B cell (primary cell): ENCODE measurements at regions of chr14 and their contacts with region 1.

Region 1: DNA sequence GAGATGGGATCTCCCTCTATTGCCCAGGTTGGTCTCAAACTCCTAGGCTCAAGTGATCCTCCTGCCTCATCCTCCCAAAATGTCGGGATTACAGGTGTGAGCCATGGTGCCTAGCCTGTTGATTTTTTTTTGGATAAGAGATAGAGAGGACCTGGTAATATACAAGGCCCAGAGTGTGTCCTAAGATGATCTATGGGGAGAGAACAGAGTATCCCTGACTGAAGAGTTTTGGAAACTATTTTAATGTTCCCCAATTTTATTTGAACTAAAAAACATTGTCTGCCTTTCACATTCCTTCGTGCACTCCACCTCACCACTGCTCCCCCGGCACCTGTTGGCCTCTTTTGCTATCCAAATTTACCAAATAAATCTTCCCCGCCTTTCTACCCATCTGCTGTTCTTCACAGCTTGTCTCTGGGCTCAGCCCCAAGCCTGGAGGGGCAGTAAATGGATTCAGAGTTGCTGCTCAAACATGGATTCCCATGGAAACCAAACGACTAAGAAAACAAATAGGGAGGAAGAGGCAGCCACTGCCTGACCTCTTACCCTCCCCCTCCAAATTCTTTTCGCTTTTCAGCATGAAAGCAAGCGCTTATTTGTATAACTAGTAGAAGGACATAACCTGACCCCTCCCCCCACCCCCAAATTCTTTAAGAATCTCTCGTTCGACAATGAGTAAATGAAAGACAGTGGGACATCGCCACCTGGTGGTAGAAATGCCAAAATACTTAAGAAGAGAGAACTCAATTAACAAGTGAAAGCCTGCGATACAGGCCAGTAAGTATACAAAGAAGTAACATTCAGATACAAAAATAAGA is 22.6 kb downstream of the OR10G3 start:
- DNase-seq: peak; percentile 88
- ATAC-seq: peak; percentile 53
- H3K4me3 ChIP-seq: peak overlapping the region in 3 of 5 experiments; percentile 1 to 45 (median 31)
- H3K4me3 Mint-ChIP-seq: peak overlapping the region; percentile 26
- H3K27ac ChIP-seq: no peak overlapping the region
- H3K27ac Mint-ChIP-seq: no peak overlapping the region
- H3K4me1 ChIP-seq: peaks cover 5% of the 10 kb centered on the region in 2 donors
- H3K4me1 Mint-ChIP-seq: peaks cover 6% of the 10 kb centered on the region
- H3K27me3 ChIP-seq: no peaks in the 10 kb centered on the region
- H3K27me3 Mint-ChIP-seq: peaks cover 3% of the 10 kb centered on the region
- CTCF ChIP-seq: peak; percentile 81

Region 2: GRCh38 chr14:21071225-21072030 is 485.9 kb before region 1 on chr14:
- CTCF ChIA-PET with region 1: no interaction called
- POLR2A ChIA-PET with region 1: no interaction called
- intact Hi-C with region 1: loop called (anchors 5 kb)
- DNase-seq: peak; percentile 79
- ATAC-seq: peak; percentile 73
- H3K4me3 ChIP-seq: peak overlapping the region; percentile 17 to 69 (median 53)
- H3K4me3 Mint-ChIP-seq: peak overlapping the region; percentile 93
- H3K27ac ChIP-seq: no peak overlapping the region
- H3K27ac Mint-ChIP-seq: peak overlapping the region; percentile 73
- H3K4me1 ChIP-seq: peaks cover 34 to 40% of the 10 kb centered on the region in 2 donors
- H3K4me1 Mint-ChIP-seq: peaks cover 44% of the 10 kb centered on the region
- H3K27me3 ChIP-seq: peaks cover 0 to 50% (median 18%) of the 10 kb centered on the region in 4 experiments
- H3K27me3 Mint-ChIP-seq: peaks cover 24% of the 10 kb centered on the region
- CTCF ChIP-seq: no peak

Region 3: GRCh38 chr14:21136024-21136423 is 421.3 kb before region 1 on chr14:
- CTCF ChIA-PET with region 1: interaction called, 3 read pairs
- POLR2A ChIA-PET with region 1: no interaction called
- intact Hi-C with region 1: loop called (anchors 10 kb)
- DNase-seq: peak; percentile 26
- ATAC-seq: no peak
- H3K4me3 ChIP-seq: no peak overlapping the region
- H3K4me3 Mint-ChIP-seq: no peak overlapping the region
- H3K27ac ChIP-seq: no peak overlapping the region
- H3K27ac Mint-ChIP-seq: no peak overlapping the region
- H3K4me1 ChIP-seq: no peaks in the 10 kb centered on the region
- H3K4me1 Mint-ChIP-seq: no peaks in the 10 kb centered on the region
- H3K27me3 ChIP-seq: no peaks in the 10 kb centered on the region
- H3K27me3 Mint-ChIP-seq: peaks cover 16% of the 10 kb centered on the region
- CTCF ChIP-seq: peak; percentile 86

Region 4: DNA sequence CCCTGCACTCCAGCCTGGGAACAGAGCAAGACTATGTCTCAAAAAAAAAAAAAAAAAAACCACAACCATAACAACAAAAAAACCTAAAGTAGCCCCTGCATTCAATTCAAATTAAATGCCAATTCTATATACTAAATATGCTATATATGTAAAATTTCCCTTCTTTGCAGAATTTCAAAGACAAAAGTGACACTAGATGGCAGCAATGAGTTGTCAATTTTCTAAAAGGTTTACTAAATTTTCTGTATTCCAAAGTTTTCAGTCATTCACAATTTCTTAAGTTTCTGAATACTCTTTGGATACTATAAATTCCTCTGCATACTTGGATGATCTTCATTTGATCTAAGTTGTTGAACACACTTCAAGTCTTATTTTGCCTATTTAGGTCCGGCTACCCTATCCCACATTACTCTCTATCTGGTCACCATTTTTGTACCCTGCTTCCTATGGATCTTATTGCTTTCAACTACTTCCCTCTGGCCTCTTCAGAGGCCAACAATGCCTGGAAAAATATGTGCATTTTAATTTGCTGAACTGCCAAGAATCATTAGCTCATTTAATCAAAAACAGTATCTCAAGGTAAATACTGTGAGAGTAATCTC is 316.0 kb before region 1 on chr14:
- CTCF ChIA-PET with region 1: interaction called, 3 read pairs
- POLR2A ChIA-PET with region 1: no interaction called
- intact Hi-C with region 1: loop called (anchors 2 kb)
- DNase-seq: peak; percentile 58
- ATAC-seq: no peak
- H3K4me3 ChIP-seq: no peak overlapping the region
- H3K4me3 Mint-ChIP-seq: no peak overlapping the region
- H3K27ac ChIP-seq: peak overlapping the region in 1 of 2 donors; percentile 10
- H3K27ac Mint-ChIP-seq: peak overlapping the region; percentile 0
- H3K4me1 ChIP-seq: peaks cover 0 to 5% of the 10 kb centered on the region in 2 donors
- H3K4me1 Mint-ChIP-seq: peaks cover 36% of the 10 kb centered on the region
- H3K27me3 ChIP-seq: no peaks in the 10 kb centered on the region
- H3K27me3 Mint-ChIP-seq: no peaks in the 10 kb centered on the region
- CTCF ChIP-seq: peak; percentile 74

Region 5: DNA sequence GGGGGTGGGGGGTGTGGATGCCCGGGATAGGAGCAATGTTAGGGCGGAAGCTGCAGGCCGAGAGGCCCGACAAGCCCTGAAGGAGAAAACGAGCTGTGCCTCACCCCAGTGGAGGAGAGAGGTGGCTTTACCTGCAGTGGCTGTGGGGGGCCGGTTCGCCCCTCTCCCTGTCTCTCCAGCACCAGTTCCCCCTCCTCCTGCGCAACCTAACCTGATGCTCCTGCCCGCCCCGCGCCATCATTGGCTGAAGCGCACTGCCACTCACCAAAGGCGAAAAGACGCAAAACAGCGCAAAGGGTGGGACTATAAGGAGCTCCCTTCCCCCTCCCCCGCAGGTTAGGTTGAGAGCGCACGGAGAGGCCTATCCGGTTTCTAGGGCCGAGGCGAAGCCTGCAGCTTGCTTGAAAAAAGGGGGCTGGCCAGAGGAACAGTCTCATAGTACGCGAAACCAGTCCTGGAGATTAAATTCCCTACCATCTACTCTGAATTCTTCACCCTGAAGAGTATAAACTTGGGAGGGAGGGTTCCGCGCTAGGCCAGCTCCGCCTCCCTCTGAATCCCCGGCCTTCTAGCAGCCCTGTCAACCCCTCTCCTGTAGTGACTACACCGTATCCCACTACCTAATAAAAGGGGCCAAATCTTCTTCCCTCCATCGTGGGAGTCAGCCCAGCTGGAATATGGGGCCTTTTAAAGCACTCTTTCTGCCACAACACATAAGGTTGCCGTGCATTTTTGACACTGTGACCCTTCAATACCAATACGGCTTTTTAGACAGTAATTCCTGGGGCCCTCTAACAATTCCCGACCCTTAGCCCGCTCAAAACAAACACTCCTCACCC is 120.0 kb before region 1 on chr14:
- CTCF ChIA-PET with region 1: interaction called, 3 read pairs
- POLR2A ChIA-PET with region 1: no interaction called
- intact Hi-C with region 1: loop called (anchors 1 kb)
- DNase-seq: peak; percentile 99
- ATAC-seq: peak; percentile 100
- H3K4me3 ChIP-seq: peak overlapping the region; percentile 79 to 96 (median 89)
- H3K4me3 Mint-ChIP-seq: peak overlapping the region; percentile 90
- H3K27ac ChIP-seq: peak overlapping the region; percentile 76 to 93
- H3K27ac Mint-ChIP-seq: peak overlapping the region; percentile 90
- H3K4me1 ChIP-seq: peaks cover 12 to 25% of the 10 kb centered on the region in 2 donors
- H3K4me1 Mint-ChIP-seq: peaks cover 53% of the 10 kb centered on the region
- H3K27me3 ChIP-seq: no peaks in the 10 kb centered on the region
- H3K27me3 Mint-ChIP-seq: no peaks in the 10 kb centered on the region
- CTCF ChIP-seq: no peak

Region 6: DNA sequence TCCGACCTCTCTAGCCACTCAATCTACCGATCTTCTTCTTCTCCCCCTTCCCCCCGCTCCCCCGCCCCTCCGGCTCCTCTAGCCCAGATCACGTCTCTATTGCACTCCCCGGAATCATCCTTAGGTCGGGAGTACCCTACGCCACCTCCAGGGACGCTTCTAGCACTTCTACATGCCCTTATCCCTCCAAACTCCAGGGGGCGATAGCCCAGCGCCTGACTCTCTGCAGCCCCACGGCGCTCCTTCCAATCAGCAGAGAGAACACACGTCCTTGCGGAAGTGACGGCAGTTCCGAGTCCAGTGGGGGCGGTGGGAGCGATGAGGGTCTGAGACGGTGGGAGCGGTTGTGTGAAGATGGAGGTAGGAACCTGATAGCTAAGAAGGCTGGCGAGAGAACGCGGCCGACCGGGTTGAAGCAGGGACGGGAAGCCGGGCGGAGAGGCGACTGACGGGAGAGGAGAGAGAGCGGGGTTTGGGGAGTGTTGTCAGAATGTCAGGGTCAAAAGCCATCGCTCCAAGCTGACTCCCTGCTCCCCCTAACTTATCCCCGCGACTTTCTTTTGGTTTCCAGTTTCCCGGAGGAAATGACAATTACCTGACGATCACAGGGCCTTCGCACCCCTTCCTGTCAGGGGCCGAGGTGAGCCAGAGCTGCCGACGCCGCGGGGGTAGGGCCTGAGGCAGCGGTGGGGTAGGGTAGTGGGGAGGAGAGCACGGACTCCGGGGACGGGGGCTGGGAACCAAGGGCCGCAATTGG is 80.2 kb before region 1 on chr14 and contains the starts of genes RAB2B and TOX4:
- CTCF ChIA-PET with region 1: interaction called, 4 read pairs
- POLR2A ChIA-PET with region 1: no interaction called
- intact Hi-C with region 1: loop called (anchors 2 kb)
- DNase-seq: peak; percentile 98
- ATAC-seq: peak; percentile 98
- H3K4me3 ChIP-seq: peak within 1 kb of the TSS; percentile 77 to 99 (median 83)
- H3K4me3 Mint-ChIP-seq: peak within 1 kb of the TSS; percentile 98
- H3K27ac ChIP-seq: peak within 1 kb of the TSS; percentile 70 to 94
- H3K27ac Mint-ChIP-seq: peak within 1 kb of the TSS; percentile 94
- H3K4me1 ChIP-seq: peaks cover 15 to 21% of the 10 kb centered on the region in 2 donors
- H3K4me1 Mint-ChIP-seq: peaks cover 33% of the 10 kb centered on the region
- H3K27me3 ChIP-seq: no peaks in the 10 kb centered on the region
- H3K27me3 Mint-ChIP-seq: no peaks in the 10 kb centered on the region
- CTCF ChIP-seq: peak; percentile 88
- total RNA-seq, gene RAB2B: 46.5 and 46.8 TPM in 2 replicates
- total RNA-seq, gene TOX4: 74.1 and 83.2 TPM in 2 replicates

Region 7: DNA sequence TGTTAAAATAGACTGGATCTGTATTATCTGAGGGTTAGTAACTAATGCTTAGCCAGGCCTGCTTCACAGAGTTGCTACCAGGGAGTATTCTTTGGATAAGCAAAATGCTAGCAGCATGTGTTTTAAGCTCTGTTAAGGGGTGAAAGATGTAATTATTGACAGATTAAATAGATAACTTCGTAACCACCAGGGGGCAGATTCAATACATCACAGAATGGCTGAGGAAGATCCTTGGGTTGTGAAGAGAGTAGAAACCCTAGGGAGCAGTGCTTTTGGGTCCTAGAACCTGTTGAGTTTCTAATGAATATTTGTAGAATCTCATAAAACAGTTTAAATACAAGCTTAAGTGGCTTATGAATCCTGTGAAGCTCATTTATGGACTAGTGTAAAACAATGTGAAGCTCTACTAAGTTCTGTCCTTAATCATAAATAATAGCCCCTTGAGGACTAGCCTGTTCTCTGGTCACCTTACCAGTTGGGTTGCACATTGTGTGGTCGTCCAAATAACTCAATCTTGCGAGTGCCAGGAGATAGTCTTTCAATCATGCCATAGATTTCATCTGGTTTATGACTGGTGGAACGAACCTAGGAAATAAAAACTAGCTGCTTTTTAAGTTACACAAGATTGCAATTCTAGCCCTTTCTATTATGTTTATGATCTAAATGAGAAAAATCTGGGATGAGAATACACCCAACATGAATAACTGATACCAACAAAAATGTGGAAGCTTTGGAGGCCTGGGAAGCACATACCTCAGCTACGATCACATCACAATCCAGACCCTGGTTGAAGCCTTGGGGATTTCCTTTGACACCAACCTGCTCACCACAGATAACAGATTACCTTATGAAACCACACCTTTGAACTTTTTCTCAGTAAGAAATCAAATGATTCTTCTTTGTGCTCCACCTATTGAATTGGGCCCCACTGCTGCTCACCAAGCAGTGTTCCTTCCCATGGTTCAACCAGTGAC is 58.5 kb before region 1 on chr14:
- CTCF ChIA-PET with region 1: interaction called, 45 read pairs
- POLR2A ChIA-PET with region 1: no interaction called
- intact Hi-C with region 1: no loop called
- DNase-seq: peak; percentile 61
- ATAC-seq: peak; percentile 36
- H3K4me3 ChIP-seq: no peak overlapping the region
- H3K4me3 Mint-ChIP-seq: no peak overlapping the region
- H3K27ac ChIP-seq: no peak overlapping the region
- H3K27ac Mint-ChIP-seq: no peak overlapping the region
- H3K4me1 ChIP-seq: no peaks in the 10 kb centered on the region
- H3K4me1 Mint-ChIP-seq: no peaks in the 10 kb centered on the region
- H3K27me3 ChIP-seq: no peaks in the 10 kb centered on the region
- H3K27me3 Mint-ChIP-seq: no peaks in the 10 kb centered on the region
- CTCF ChIP-seq: peak; percentile 72